Uterus (tissue), 4 donors: ENCODE measurements at regions of chr9 and their contacts with region 1.

Region 1: DNA sequence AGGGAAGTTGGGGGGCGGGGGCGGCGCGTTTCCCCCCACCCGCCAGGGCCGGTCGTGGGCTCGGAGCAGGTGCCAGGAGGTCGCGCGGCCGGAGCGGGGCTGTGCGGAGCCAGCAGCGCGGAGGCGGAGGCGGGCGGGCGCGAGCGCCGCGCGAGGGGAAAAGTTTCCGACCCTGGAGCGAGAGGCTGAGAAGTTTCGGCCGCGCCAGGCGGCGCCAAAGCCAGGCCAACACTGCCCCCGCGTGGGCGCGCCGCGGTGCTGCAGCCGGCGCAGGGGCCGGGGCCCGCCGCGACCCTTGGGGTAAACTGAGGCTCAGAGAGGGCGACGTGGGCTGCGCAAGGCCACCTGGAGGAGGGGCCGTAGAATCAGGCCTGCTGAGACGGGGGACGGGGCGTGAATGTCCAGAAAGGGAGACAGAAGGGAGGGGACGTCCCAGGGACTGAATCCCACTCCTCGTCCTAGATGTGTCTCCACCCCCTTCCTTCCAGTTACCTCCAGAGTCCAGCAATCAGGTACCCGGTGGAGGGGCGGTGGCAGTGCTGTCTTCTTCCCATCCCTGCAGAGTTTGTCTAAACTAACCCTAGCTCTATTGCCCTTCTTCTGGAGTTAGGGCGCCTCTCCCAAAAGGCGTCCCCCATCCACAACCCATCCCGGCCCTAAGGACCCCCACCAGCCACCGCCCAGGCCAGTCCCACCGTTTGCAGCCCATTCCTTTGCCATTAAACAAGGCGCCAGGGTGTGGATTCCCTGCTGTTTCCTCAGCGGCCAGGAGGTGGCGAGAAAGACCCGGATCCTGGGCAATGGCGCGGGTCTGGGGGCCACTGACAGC is 10.2 kb downstream of the C9orf50 start:
- DNase-seq: peak; percentile 78 to 85
- H3K4me3 ChIP-seq: peak overlapping the region; percentile 34 to 58
- H3K27ac ChIP-seq: peak overlapping the region; percentile 89 to 90
- H3K4me1 ChIP-seq: peaks cover 0 to 12% of the 10 kb centered on the region in 2 donors
- H3K27me3 ChIP-seq: no peaks in the 10 kb centered on the region
- CTCF ChIP-seq: peak; percentile 65 to 100 (median 98)
- POLR2A ChIP-seq: peak in 1 of 2 donors; percentile 51

Region 2: DNA sequence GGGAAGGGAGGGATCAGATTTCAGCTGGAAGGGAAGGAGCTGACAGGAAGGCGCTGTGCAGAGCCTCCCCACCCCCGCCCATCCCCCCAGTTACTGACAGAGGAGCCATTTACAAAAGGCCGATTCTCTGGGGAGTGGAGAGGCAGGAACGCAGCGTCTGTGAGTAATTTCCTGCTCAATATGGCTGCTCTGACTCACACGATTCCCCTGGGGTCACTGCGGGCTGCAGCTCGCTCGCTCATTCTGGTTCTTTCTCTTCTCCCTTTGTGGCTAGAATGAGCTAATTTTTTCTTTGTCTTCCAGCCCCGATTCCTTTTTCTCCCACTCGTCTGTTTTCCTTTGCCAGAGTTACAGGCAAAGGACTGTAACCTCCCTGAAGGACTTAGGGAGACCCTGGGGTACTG is 470.7 kb before region 1 on chr9:
- intact Hi-C with region 1: loop called (anchors 5 kb)
- DNase-seq: peak; percentile 91 to 99
- H3K4me3 ChIP-seq: peak overlapping the region; percentile 36 to 42
- H3K27ac ChIP-seq: peak overlapping the region; percentile 99 to 100
- H3K4me1 ChIP-seq: peaks cover 22 to 40% of the 10 kb centered on the region in 2 donors
- H3K27me3 ChIP-seq: no peaks in the 10 kb centered on the region
- CTCF ChIP-seq: peak in 2 of 4 experiments; percentile 2 to 25
- POLR2A ChIP-seq: peak; percentile 70 to 73

Region 3: GRCh38 chr9:129495534-129496325 is 115.0 kb before region 1 on chr9:
- intact Hi-C with region 1: loop called (anchors 5 kb)
- DNase-seq: peak; percentile 95 to 97
- H3K4me3 ChIP-seq: peak overlapping the region; percentile 63 to 67
- H3K27ac ChIP-seq: peak overlapping the region; percentile 98 to 100
- H3K4me1 ChIP-seq: peaks cover 4 to 34% of the 10 kb centered on the region in 2 donors
- H3K27me3 ChIP-seq: no peaks in the 10 kb centered on the region
- CTCF ChIP-seq: peak in 1 of 4 experiments; percentile 11
- POLR2A ChIP-seq: peak; percentile 18 to 39

Region 4: GRCh38 chr9:129550199-129550839 is 60.4 kb before region 1 on chr9:
- intact Hi-C with region 1: no loop called
- DNase-seq: peak; percentile 76 to 89
- H3K4me3 ChIP-seq: peak overlapping the region; percentile 31 to 52
- H3K27ac ChIP-seq: peak overlapping the region; percentile 61 to 79
- H3K4me1 ChIP-seq: peaks cover 0 to 4% of the 10 kb centered on the region in 2 donors
- H3K27me3 ChIP-seq: no peaks in the 10 kb centered on the region
- CTCF ChIP-seq: no peak
- POLR2A ChIP-seq: no peak